Ascending aorta (tissue), 2 donors: ENCODE measurements at regions of chr22 and their contacts with region 1.

Region 1: DNA sequence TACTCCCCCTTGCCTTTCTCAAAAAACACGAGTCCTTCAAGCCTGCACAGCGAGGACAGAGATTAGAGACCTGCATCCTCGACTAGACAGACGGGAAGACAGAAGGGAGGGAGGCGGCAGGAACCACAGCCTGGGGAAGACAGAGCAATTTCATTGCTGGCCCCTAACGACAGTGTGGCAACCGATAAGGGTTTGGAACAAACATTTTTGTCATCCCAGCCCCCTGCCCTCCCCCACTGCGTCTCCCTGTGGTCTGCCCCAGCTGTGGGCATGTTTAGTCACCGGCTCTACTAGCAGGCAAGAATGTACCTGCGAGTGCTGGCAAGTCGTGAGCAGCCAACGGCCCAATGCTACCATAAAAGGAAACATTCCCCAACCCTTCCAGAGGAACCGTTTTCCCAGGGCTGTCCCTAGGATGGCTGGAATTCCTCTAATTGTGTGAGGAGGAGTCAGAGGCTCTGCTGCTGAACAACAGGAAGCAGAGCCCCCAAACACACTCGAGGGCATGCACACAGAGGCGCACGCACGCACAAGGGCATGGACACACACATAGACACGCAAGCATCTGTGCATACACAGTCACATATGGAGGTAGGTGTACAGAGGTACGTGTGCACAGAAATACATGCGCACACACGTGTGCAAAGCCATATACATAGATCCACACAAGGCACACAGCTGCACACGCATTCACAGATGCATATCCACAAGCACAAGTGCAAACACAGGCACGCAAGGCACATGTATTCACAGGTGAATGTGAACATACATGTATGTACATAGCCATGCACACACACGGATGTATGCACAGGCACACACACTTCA is 58.3 kb downstream of the MYH9 start:
- DNase-seq: peak; percentile 66 to 97
- H3K4me3 ChIP-seq: peak overlapping the region; percentile 34 to 40
- H3K27ac ChIP-seq: peak overlapping the region; percentile 98 to 99
- H3K4me1 ChIP-seq: peaks cover 76 to 95% of the 10 kb centered on the region in 2 donors
- H3K27me3 ChIP-seq: no peaks in the 10 kb centered on the region
- CTCF ChIP-seq: no peak

Region 2: GRCh38 chr22:36191106-36191836 is 138.2 kb before region 1 on chr22:
- intact Hi-C with region 1: no loop called
- DNase-seq: peak; percentile 22 to 75
- H3K4me3 ChIP-seq: no peak overlapping the region
- H3K27ac ChIP-seq: no peak overlapping the region
- H3K4me1 ChIP-seq: no peaks in the 10 kb centered on the region
- H3K27me3 ChIP-seq: no peaks in the 10 kb centered on the region
- CTCF ChIP-seq: no peak

Region 3: GRCh38 chr22:36352803-36353507 is 23.5 kb after region 1 on chr22:
- intact Hi-C with region 1: loop called (anchors 1 kb)
- DNase-seq: peak in 1 of 2 donors; percentile 91
- H3K4me3 ChIP-seq: peak overlapping the region; percentile 51 to 54
- H3K27ac ChIP-seq: peak overlapping the region; percentile 92 to 99
- H3K4me1 ChIP-seq: peaks cover 54 to 92% of the 10 kb centered on the region in 2 donors
- H3K27me3 ChIP-seq: no peaks in the 10 kb centered on the region
- CTCF ChIP-seq: no peak

Region 4: GRCh38 chr22:36366291-36366708 is 36.8 kb after region 1 on chr22:
- intact Hi-C with region 1: loop called (anchors 2 kb)
- DNase-seq: peak in 1 of 2 donors; percentile 57
- H3K4me3 ChIP-seq: peak overlapping the region in 1 of 2 donors; percentile 54
- H3K27ac ChIP-seq: peak overlapping the region; percentile 92 to 99
- H3K4me1 ChIP-seq: peaks cover 61 to 98% of the 10 kb centered on the region in 2 donors
- H3K27me3 ChIP-seq: no peaks in the 10 kb centered on the region
- CTCF ChIP-seq: no peak